ENCODE measurements at regions of chr2 and their contacts with region 1.

Region 1: GRCh38 chr2:102442967-102443828 is 20.2 kb downstream of the IL18RAP start:
- DNase-seq: peak; percentile 72
- ATAC-seq: peak; percentile 83
- H3K4me3 Mint-ChIP-seq: peak overlapping the region; percentile 41
- H3K27ac Mint-ChIP-seq: peak overlapping the region; percentile 65
- H3K4me1 Mint-ChIP-seq: peaks cover 12% of the 10 kb centered on the region
- H3K27me3 Mint-ChIP-seq: no peaks in the 10 kb centered on the region

Region 2: GRCh38 chr2:102005989-102006885 is 437.0 kb before region 1 on chr2:
- CTCF ChIA-PET with region 1: interaction called, 10 read pairs
- POLR2A ChIA-PET with region 1: no interaction called
- DNase-seq: peak; percentile 49
- ATAC-seq: peak; percentile 57
- H3K4me3 Mint-ChIP-seq: no peak overlapping the region
- H3K27ac Mint-ChIP-seq: no peak overlapping the region
- H3K4me1 Mint-ChIP-seq: no peaks in the 10 kb centered on the region
- H3K27me3 Mint-ChIP-seq: peaks cover 2% of the 10 kb centered on the region

Region 3: GRCh38 chr2:102235491-102235890 is 207.7 kb before region 1 on chr2:
- CTCF ChIA-PET with region 1: interaction called, 67 read pairs
- POLR2A ChIA-PET with region 1: interaction called, 4 read pairs
- DNase-seq: peak; percentile 54
- ATAC-seq: no peak
- H3K4me3 Mint-ChIP-seq: no peak overlapping the region
- H3K27ac Mint-ChIP-seq: peak overlapping the region; percentile 13
- H3K4me1 Mint-ChIP-seq: peaks cover 47% of the 10 kb centered on the region
- H3K27me3 Mint-ChIP-seq: no peaks in the 10 kb centered on the region

Region 4: GRCh38 chr2:102278720-102279390 is 164.3 kb before region 1 on chr2:
- CTCF ChIA-PET with region 1: interaction called, 11 read pairs
- POLR2A ChIA-PET with region 1: no interaction called
- DNase-seq: no peak
- ATAC-seq: no peak
- H3K4me3 Mint-ChIP-seq: no peak overlapping the region
- H3K27ac Mint-ChIP-seq: peak overlapping the region; percentile 80
- H3K4me1 Mint-ChIP-seq: peaks cover 72% of the 10 kb centered on the region
- H3K27me3 Mint-ChIP-seq: no peaks in the 10 kb centered on the region

Region 5: DNA sequence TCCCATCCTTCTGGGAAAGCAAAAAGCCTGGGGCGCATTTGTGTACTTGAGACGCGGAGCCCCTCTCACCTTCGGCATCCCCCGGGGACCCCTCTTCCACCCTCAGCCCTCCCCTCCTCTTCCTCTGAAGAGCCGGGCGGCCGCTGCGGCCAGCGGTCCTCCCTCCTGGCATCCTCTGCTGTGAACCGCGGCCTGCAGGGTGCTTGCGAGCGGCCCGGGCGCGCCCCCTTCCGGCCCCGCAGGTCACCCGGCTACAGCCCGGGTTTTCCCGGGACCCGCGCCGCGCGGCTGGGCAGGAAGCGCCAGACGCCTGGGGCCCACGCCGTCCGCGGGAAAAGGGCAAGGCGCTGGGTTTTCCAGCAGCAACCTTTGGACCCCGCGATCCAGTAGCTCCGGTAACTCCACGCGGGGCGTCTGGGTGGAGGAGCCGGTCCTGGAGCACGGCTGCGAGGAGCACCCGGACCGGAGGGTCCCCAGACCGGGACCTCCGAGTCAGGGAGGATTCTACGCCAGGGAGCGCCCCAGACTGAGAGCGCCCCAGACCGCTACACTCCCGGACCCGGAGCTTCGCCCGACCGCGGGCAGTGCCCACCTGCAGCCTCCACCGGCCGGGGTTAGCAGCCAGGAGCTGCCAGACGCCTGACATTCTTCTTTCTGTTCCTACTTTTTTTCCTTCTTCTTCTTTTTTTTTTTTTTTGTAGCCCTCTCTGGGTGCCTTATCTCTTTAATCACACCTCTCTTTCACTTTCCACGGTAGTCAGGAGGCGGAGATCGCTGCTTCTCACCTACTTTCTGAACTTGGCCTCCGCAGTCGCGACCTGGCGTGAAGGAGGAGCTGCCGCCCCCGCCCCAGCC is 87.4 kb before region 1 on chr2 and contains the start of gene IL18R1:
- CTCF ChIA-PET with region 1: interaction called, 54 read pairs
- POLR2A ChIA-PET with region 1: interaction called, 5 read pairs
- DNase-seq: peak; percentile 81
- ATAC-seq: peak; percentile 92
- H3K4me3 Mint-ChIP-seq: peak within 1 kb of the TSS; percentile 100
- H3K27ac Mint-ChIP-seq: peak within 1 kb of the TSS; percentile 96
- H3K4me1 Mint-ChIP-seq: peaks cover 54% of the 10 kb centered on the region
- H3K27me3 Mint-ChIP-seq: no peaks in the 10 kb centered on the region
- total RNA-seq, gene IL18R1: 50.2 to 53.1 TPM

Region 6: DNA sequence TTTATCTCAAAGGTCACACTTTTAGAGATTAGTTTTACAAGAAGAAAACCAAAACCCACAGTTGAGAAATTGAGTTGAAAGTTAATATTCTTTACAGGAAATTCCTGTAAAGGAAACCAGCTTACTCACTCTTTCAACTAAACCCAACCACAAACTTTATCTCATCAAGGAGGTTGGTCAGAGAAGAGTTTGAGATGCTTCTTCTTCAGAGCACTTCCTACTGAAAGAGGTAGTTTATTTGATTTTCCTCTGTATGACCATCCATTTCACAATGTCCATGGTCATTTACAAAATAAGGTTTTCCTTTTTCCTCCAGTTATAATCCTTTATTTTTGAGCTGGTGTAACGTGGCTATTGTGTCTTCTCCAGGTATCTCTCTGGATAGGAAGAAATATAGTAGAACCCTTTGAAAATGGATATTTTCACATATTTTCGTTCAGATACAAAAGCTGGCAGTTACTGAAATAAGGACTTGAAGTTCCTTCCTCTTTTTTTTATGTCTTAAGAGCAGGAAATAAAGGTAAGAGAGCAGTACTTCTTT is 24.7 kb before region 1 on chr2:
- CTCF ChIA-PET with region 1: interaction called, 39 read pairs
- POLR2A ChIA-PET with region 1: no interaction called
- DNase-seq: peak; percentile 46
- ATAC-seq: peak; percentile 78
- H3K4me3 Mint-ChIP-seq: peak overlapping the region; percentile 84
- H3K27ac Mint-ChIP-seq: peak overlapping the region; percentile 96
- H3K4me1 Mint-ChIP-seq: peaks cover 72% of the 10 kb centered on the region
- H3K27me3 Mint-ChIP-seq: no peaks in the 10 kb centered on the region

Region 7: GRCh38 chr2:102498414-102498813 is 55.2 kb after region 1 on chr2:
- CTCF ChIA-PET with region 1: no interaction called
- POLR2A ChIA-PET with region 1: no interaction called
- DNase-seq: peak; percentile 10
- ATAC-seq: no peak
- H3K4me3 Mint-ChIP-seq: no peak overlapping the region
- H3K27ac Mint-ChIP-seq: no peak overlapping the region
- H3K4me1 Mint-ChIP-seq: no peaks in the 10 kb centered on the region
- H3K27me3 Mint-ChIP-seq: peaks cover 18% of the 10 kb centered on the region